ENCODE measurements at regions of chr11 and their contacts with region 1.

Region 1: GRCh38 chr11:3631331-3631730 is 10.5 kb downstream of the ART5 start:
- DNase-seq: no peak
- H3K4me3 ChIP-seq: no peak overlapping the region
- CTCF ChIP-seq: no peak

Region 2: DNA sequence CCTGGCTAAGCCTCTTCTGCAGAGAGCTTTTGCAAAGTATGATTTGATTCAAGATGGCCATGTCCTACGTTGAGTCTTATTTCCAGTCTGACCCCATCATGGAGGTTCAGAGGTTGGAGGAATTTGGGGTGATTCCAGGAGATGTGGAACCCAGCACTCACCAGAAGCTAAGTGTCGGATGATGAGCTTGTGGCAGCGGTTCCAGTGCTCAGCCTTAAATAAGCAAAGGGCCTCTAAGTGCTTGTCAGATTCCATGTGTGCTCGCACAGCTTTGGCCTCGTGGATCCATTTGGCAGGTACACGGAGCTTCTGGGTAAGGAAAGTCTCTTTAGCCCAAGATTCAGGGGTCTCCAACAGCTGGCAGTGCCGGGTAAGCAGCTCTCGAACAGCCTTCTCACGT is 51.7 kb after region 1 on chr11:
- in situ Hi-C with region 1: loop called (anchors 5 kb)
- DNase-seq: no peak
- H3K4me3 ChIP-seq: no peak overlapping the region
- CTCF ChIP-seq: no peak

Region 3: GRCh38 chr11:3709977-3710376 is 78.6 kb after region 1 on chr11:
- in situ Hi-C with region 1: no loop called
- DNase-seq: peak; percentile 80
- H3K4me3 ChIP-seq: no peak overlapping the region
- CTCF ChIP-seq: no peak

Region 4: DNA sequence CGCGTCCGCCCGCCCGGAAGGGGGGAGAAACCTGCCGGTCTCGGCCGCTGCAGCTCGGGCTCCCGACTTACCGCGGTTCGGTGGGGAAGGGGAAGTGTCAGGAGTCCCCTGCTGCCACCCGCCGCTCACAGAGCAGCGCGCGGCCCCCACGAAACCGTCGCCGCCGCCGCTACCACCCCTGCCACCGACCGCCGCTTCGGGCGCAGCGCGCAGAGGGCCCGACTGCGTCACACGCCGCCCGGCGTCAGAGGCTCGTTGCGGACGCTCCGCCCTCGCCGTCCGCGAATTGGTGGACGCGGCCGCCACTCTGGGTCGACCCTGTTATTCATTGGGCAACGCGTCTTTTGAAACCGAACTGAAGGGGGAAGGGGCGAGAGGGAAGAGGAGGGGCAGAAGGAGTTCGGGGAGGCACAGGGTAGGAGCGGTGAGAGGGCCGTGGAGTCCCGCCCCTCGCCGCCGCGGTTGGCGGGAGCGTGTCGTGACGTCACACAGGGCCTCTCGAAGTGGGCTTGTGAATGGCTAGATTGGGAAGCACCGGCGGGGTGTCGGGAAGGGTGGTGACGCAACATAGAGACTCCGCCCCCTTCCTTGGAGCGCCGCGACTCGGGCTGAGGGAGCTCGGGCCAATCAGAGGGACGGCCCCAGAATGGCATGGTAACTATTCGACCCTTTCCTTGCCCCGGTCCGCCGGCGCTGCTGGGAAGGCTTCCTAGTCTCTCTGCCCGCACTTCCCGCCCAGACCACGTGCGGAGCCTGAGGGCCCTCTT is 166.2 kb after region 1 on chr11 and contains the start of gene NUP98:
- in situ Hi-C with region 1: no loop called
- DNase-seq: peak; percentile 98
- H3K4me3 ChIP-seq: peak within 1 kb of the TSS; percentile 98
- CTCF ChIP-seq: no peak